Dorsolateral prefrontal cortex (tissue), 120 donors: ENCODE measurements at regions of chr9 and their contacts with region 1.

Region 1: GRCh38 chr9:94084314-94084713 is at the start of gene PTPDC1:
- DNase-seq: peak; percentile 30 to 93 (median 76)
- H3K4me3 ChIP-seq: peak within 1 kb of the TSS; percentile 36 to 87 (median 66)
- H3K27ac ChIP-seq: peak within 1 kb of the TSS; percentile 15 to 93 (median 80)
- H3K27me3 ChIP-seq: no peaks in the 10 kb centered on the region
- CTCF ChIP-seq: peak in 3 of 56 donors; percentile 11 to 17 (median 16)
- total RNA-seq, gene PTPDC1: 15.0 to 85.4 (median 26.8) TPM

Region 2: GRCh38 chr9:94030318-94031179 is 53.8 kb before region 1 on chr9:
- intact Hi-C with region 1: loop called in 1 of 2 experiments (anchors 10 kb)
- DNase-seq: peak; percentile 80 to 93 (median 86)
- H3K4me3 ChIP-seq: peak overlapping the region; percentile 74 to 99 (median 90)
- H3K27ac ChIP-seq: peak overlapping the region in 46 of 59 donors; percentile 12 to 88 (median 62)
- H3K27me3 ChIP-seq: no peaks in the 10 kb centered on the region
- CTCF ChIP-seq: peak in 20 of 56 donors; percentile 9 to 50 (median 26)